ENCODE measurements at regions of chr14 and their contacts with region 1.

Region 1: GRCh38 chr14:70972107-70972976 is 65.1 kb downstream of the PCNX1 start:
- DNase-seq: peak; percentile 92 to 94
- H3K4me3 ChIP-seq: no peak overlapping the region
- H3K27ac ChIP-seq: peak overlapping the region in 1 of 5 donors; percentile 15
- H3K4me1 ChIP-seq: peaks cover 0 to 18% (median 3%) of the 10 kb centered on the region in 4 donors
- H3K27me3 ChIP-seq: no peaks in the 10 kb centered on the region
- CTCF ChIP-seq: peak in 5 of 7 experiments; percentile 70 to 99 (median 86)
- EP300 ChIP-seq: no peak
- POLR2A ChIP-seq: no peak

Region 2: GRCh38 chr14:70234110-70234950 is 738.0 kb before region 1 on chr14:
- intact Hi-C with region 1: no loop called
- DNase-seq: no peak
- H3K4me3 ChIP-seq: no peak overlapping the region
- H3K27ac ChIP-seq: no peak overlapping the region
- H3K4me1 ChIP-seq: no peaks in the 10 kb centered on the region
- H3K27me3 ChIP-seq: peaks cover 0 to 9% (median 0%) of the 10 kb centered on the region in 3 donors
- CTCF ChIP-seq: no peak
- EP300 ChIP-seq: no peak
- POLR2A ChIP-seq: no peak

Region 3: DNA sequence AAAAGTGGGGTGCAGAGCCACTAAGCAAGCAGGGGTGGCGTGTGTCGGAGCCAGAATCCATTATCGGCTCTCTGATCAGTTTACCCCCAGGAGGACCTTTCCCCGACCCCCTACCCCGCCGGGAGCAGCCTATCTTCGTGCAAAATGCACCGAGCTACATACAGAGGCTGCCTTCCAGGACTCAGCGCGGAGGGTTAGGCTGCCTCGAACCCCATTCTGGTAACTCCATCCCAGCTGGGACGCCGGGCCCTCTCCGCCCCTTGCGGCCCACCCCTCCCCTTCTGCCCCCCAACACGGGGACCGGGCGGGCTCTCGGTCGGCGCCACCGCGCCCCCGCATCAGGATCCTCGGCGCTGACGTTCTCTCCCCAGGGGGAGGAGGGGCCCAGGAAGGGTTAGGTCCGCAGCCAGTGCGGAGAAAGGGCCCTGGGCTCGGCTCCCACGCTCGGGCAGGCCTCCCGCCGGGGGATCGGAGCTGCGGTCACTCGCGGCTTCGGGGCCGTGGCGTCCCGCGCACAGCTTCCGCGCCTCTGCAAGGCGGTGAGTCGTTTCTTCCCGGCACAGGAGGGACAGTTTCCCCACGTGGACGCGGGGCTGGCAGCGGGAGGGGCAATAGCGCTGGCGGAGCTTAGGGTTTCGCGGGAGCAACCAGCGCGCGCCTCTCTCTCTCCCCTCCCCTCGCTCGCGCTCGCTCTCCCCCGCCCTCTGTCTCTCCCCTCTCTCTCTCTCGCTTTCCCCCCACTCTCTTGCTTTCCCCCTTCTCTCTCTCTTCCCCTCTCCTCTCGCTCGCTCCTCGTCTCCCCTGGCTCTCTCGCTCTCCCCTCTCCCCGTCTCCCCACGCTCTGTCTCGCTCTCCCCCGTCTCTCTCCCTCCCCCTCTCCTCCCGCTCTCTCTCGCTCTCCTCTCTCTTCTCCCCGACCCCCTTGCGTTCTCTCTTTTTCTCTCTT is 150.5 kb before region 1 on chr14:
- intact Hi-C with region 1: loop called (anchors 10 kb)
- DNase-seq: peak; percentile 56 to 82
- H3K4me3 ChIP-seq: peak overlapping the region; percentile 48 to 77 (median 66)
- H3K27ac ChIP-seq: peak overlapping the region in 4 of 5 donors; percentile 38 to 51 (median 46)
- H3K4me1 ChIP-seq: peaks cover 13 to 30% (median 26%) of the 10 kb centered on the region in 4 donors
- H3K27me3 ChIP-seq: peaks cover 0 to 37% (median 0%) of the 10 kb centered on the region in 3 donors
- CTCF ChIP-seq: no peak
- EP300 ChIP-seq: no peak
- POLR2A ChIP-seq: no peak

Region 4: GRCh38 chr14:70907176-70907995 is 65.0 kb before region 1 on chr14 and contains the start of gene PCNX1:
- intact Hi-C with region 1: loop called (anchors 10 kb)
- DNase-seq: peak; percentile 88 to 96
- H3K4me3 ChIP-seq: peak within 1 kb of the TSS; percentile 78 to 97 (median 94)
- H3K27ac ChIP-seq: peak within 1 kb of the TSS; percentile 91 to 98 (median 96)
- H3K4me1 ChIP-seq: peaks cover 7 to 61% (median 41%) of the 10 kb centered on the region in 4 donors
- H3K27me3 ChIP-seq: no peaks in the 10 kb centered on the region
- CTCF ChIP-seq: peak in 5 of 7 experiments; percentile 22 to 89 (median 83)
- EP300 ChIP-seq: no peak
- POLR2A ChIP-seq: no peak
- total RNA-seq, gene PCNX1: 39.7 to 198 (median 61.8) TPM

Region 5: DNA sequence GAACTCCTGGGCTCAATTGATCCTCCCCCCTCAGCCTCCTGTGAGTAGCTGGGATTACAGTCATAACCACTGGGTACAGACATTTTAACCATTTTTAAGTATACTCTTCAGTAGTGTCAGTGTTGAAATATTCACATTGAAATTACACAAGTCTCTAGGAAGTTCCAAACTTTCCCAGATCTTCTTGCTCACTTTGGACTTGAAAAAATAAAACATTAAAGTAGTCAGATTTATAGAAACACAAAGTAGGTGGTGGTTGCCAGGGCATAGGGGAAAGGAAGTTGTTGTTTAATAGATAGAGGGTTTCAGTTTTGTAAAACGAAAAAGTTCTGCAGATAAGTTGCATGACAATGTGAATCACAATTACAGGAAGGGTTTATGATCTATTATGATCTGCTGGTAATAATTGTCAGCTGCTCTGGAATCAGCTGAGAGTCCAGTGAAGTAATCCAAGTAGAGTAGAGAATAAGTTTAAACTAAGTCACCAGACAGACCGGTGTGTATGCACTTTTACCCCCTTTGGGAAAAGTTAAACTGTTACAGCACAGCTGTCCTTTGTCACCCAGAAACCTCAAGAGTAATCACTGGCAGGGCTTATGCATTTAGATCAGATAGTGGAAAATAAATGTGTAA is 37.7 kb before region 1 on chr14:
- intact Hi-C with region 1: no loop called
- DNase-seq: peak in 1 of 2 donors; percentile 43
- H3K4me3 ChIP-seq: no peak overlapping the region
- H3K27ac ChIP-seq: peak overlapping the region in 3 of 5 donors; percentile 33 to 51 (median 40)
- H3K4me1 ChIP-seq: peaks cover 7 to 50% (median 27%) of the 10 kb centered on the region in 4 donors
- H3K27me3 ChIP-seq: no peaks in the 10 kb centered on the region
- CTCF ChIP-seq: no peak
- EP300 ChIP-seq: no peak
- POLR2A ChIP-seq: no peak

Region 6: DNA sequence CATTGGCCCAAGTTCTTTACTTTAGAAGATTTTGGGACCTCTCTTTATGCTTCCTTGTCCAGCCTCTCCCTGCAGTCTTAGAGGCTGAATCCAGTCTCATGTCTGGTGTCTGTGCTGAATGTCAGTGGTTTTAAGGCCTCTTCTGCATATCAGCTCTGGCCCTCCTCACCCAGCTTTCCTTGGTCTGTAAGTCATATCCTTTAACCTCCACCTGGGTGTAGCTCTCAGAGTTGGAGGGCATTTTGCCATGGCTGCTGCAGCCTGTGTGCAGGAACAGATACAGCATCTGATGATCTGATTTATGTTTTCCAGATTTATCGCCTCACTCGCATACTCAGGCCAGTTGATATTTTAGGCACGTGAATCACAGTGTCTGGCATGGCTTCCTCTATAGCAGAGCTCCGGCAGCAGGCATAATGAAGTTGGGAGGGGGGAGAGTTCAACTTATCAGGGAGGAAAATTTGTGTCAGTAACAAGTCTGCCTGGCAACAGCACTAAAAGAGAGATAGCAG is 270.0 kb after region 1 on chr14:
- intact Hi-C with region 1: no loop called
- DNase-seq: peak in 1 of 2 donors; percentile 70
- H3K4me3 ChIP-seq: no peak overlapping the region
- H3K27ac ChIP-seq: no peak overlapping the region
- H3K4me1 ChIP-seq: peaks cover 0 to 9% (median 0%) of the 10 kb centered on the region in 4 donors
- H3K27me3 ChIP-seq: no peaks in the 10 kb centered on the region
- CTCF ChIP-seq: no peak
- EP300 ChIP-seq: no peak
- POLR2A ChIP-seq: no peak